GM18951 (cell line): ENCODE measurements at regions of chr17 and their contacts with region 1.

Region 1: DNA sequence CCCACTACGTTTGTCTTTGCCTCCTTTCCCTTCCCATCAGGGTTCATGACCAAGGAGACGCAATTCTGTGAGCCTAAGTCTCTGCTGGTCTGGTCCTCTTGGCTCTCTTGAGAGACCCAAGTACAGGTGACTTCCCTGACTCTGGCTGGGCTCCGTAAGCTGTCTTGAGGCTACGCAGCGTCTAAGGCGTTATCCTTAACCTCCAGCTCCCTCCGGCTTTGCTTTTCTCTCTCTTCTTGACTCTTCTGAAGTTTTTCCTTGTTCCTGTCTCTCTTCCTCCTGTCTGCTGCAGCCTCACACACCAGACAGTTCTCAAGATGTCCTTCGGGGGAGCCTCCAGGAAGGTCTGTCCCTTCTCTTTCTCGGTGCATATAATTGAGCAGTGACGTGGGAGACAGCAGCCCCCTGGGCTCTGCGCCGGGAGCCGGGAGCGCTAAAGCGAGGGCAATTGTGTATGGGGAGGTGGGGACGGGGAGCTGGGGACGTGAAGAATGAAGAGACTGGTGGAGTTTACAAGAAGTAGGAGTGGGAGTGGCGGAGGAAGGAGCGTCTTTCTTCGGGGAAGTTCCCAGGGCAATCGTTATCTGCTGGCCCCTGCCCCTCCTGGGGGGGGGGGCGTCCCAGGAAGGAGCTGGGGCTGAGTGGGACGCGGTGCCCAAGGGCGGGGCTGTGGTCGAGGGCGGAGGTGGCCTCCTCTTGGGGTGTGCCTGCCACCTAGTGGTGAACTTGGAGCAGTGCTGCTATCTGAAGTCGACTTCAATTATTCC is 6.9 kb upstream of the PIRT start:
- POLR2A ChIP-seq: no peak

Region 2: GRCh38 chr17:10646392-10646990 is 198.3 kb before region 1 on chr17:
- in situ Hi-C with region 1: loop called (anchors 10 kb)
- POLR2A ChIP-seq: no peak

Region 3: DNA sequence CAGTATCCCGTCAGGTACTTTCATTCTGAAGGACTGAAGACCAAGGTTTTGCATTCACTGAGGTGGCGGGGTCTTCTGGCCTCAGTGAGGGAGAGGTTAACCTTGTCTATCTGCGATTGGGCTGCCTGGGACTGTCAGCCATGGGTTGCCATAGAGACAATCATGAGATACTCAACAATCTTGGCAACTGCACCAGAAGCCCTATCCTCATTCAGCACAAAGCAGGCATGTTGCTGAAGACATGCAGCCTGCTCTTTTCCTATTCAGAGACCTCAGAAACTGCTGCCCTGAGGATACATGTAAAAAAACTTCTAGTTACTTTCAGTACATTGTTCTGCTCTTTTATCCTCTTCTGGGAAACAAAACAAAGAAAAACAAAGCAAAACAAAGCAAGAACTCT is 139.4 kb after region 1 on chr17:
- in situ Hi-C with region 1: no loop called
- POLR2A ChIP-seq: no peak